ENCODE measurements at regions of chr11 and their contacts with region 1.

Region 1: DNA sequence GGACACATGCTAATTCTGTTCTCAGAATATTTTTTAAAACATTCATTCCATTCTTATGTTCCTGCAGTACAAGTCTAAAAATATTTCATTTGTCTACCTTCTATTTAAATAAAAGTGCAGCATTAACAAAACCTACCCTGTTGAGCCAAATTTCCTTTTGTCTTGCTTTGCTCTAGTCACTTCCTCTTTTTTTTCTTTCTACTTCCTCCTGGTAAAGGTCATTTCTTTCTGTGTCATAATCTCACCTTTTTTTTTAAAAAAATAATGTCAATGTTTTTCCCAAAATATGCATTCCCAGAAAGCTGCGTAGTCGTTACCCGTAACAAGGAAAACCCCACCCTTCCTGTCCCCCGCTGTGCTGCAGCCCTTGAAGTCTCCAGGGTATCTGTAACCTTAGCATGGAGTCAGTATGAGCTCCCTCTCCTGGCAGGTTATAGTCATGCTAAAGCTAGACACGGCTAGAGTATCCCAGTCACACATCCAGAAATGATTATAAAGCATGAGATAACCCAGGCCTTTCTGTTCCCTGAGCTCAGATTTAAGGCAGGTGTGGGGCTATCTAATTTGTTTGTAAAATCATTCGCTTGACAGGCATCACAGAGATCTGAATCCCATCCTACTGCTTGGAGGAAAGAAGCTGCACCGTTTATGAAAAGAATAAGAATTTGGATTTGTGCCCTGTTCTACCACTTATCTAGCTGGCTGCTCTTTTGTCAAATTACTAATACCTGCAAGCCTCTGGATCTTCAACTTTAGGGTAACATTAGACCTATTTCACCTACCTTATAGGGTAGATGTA is 51.1 kb upstream of the EED start:
- DNase-seq: peak; percentile 73
- H3K27ac ChIP-seq: no peak overlapping the region
- CTCF ChIP-seq: peak; percentile 66

Region 2: DNA sequence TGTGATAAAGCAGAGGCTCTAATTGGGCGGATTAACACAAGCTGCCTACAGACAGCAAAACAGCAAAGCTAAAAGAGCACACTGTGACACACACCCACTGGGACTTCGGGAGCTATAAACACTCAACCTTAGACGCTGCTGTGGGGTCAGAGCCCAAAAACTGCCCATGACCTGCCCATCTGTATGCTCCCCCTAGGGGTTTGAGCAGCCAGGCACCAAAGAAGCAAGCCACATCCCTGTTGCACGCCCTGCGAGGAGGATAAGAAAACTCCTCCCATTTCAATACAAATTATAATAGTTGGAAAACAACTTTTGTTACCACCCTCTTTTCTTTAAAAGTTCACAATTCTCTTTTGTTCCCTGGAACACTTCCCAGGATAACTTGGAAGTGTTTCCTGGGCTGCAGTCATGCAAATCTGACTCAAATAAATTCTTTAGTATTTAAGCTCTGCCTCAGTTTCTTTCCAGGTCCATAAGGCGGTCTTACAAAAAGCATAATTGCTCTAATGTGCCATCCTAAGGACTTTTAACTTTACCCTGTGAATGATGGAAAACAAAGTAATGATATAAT is 652.8 kb before region 1 on chr11:
- CTCF ChIA-PET with region 1: no interaction called
- POLR2A ChIA-PET with region 1: no interaction called
- DNase-seq: no peak
- H3K27ac ChIP-seq: no peak overlapping the region
- CTCF ChIP-seq: no peak

Region 3: DNA sequence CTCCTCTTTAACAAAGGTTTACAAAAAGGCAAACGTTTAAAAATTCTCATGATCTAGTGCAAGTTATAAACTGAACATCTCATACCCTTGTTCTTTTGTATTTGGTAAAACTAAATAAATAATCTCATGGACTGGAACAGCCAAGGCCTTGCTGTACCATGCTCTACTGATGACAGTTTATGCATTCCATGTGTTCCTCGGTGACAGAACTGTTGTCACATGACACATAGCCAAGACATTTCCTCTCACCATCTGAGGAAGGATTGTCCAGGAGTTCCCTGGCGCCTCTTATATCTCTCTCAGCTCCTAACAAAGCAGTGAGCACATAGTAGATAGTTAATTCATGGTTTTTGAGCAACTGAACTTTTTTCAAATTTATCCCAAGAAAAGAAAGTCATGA is 325.7 kb before region 1 on chr11:
- CTCF ChIA-PET with region 1: no interaction called
- POLR2A ChIA-PET with region 1: no interaction called
- DNase-seq: no peak
- H3K27ac ChIP-seq: no peak overlapping the region
- CTCF ChIP-seq: no peak

Region 4: DNA sequence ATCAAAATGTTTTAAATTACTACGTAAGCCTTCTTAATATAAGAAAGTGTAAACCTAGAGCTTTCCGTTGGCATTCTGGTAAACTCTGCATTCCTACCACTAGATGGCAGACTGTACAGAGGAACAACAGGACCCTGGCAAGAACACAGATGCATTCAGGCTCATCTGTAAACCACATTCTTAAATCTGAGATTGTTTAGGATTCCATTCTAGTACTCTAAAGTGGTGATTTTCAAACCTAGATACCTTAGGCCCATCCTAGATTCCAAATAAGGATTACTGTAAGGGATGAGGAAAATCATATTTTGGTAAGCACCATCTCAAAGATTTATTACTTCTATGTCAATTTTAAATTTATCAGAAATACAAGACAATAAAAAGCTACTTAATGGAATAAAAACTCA is 151.5 kb before region 1 on chr11:
- CTCF ChIA-PET with region 1: interaction called, 18 read pairs
- POLR2A ChIA-PET with region 1: no interaction called
- DNase-seq: peak; percentile 67
- H3K27ac ChIP-seq: no peak overlapping the region
- CTCF ChIP-seq: peak; percentile 85

Region 5: GRCh38 chr11:86249307-86250098 is 56.0 kb after region 1 on chr11:
- CTCF ChIA-PET with region 1: interaction called, 10 read pairs
- POLR2A ChIA-PET with region 1: no interaction called
- DNase-seq: no peak
- H3K27ac ChIP-seq: no peak overlapping the region
- CTCF ChIP-seq: no peak

Region 6: DNA sequence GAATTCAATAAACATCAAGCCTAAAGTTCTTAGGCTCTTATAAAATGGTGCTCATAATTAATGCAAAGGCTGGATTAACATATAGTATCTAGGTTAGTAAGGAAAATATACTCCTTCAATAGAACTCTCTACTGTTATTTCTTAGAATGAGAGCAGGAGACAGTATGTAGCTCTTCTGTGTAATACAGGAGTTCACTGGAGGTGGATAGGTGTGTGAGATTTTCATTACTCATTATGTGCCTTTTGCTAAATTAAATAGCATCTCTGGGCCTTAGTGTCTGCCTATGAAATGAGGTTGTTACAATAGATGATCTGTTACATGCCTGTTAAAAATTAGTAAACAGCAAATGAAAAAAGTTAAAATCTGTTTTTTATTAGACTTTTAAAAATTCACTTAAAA is 71.7 kb after region 1 on chr11:
- CTCF ChIA-PET with region 1: no interaction called
- POLR2A ChIA-PET with region 1: no interaction called
- DNase-seq: no peak
- H3K27ac ChIP-seq: no peak overlapping the region
- CTCF ChIP-seq: no peak

Measured in RWPE1 (cell line).